GM12878 (cell line): ENCODE measurements at regions of chr18 and their contacts with region 1.

Region 1: GRCh38 chr18:50967714-50968661 is at the start of gene ELAC1:
- DNase-seq: peak; percentile 20
- ATAC-seq: peak; percentile 96
- H3K4me3 ChIP-seq: peak within 1 kb of the TSS; percentile 74
- H3K27ac ChIP-seq: peak within 1 kb of the TSS; percentile 89
- H3K4me1 ChIP-seq: peaks cover 5% of the 10 kb centered on the region
- H3K27me3 ChIP-seq: no peaks in the 10 kb centered on the region
- CTCF ChIP-seq: no peak
- EP300 ChIP-seq: no peak
- POLR2A ChIP-seq: peak; percentile 97
- RAD21 ChIP-seq: no peak
- polyA plus RNA-seq, gene ELAC1: 4.9 to 8.0 TPM

Region 2: DNA sequence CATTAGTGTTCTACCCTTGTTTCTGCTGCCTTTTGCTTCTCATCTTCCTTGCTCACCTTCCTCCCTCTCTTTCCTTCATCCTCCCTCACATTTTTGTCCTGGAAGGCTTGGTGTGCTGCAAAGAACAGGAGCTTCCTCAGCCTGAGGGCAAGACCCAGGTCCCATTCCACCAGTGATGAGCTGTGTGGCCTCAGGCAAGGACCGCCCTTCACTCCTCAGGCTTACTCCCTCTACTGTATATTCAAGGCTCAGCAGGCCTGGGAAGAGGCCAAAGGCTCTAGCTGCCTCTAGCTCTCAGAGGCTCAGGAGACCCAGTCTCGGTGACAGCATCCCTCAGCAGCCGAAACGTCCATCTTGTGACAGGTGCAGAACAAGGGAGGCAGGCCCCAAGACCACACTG is 245.7 kb before region 1 on chr18:
- CTCF ChIA-PET with region 1: no interaction called
- POLR2A ChIA-PET with region 1: no interaction called
- RAD21 ChIA-PET with region 1: no interaction called
- SMC1A ChIA-PET with region 1: no interaction called
- in situ Hi-C with region 1: no loop called
- intact Hi-C with region 1: no loop called
- DNase-seq: no peak
- ATAC-seq: no peak; the same call in 2 of the 3 replicates
- H3K4me3 ChIP-seq: no peak overlapping the region
- H3K27ac ChIP-seq: no peak overlapping the region
- H3K4me1 ChIP-seq: peaks cover 5% of the 10 kb centered on the region
- H3K27me3 ChIP-seq: no peaks in the 10 kb centered on the region; a peak in 1 of 4 replicates
- CTCF ChIP-seq: 0 out of 6 replicates have a peak, but pooled peaks of 2 of the 3 experiments have one; percentile 3 to 10
- EP300 ChIP-seq: no peak
- POLR2A ChIP-seq: no peak
- RAD21 ChIP-seq: no peak

Region 3: GRCh38 chr18:50944245-50944932 is 23.6 kb before region 1 on chr18:
- CTCF ChIA-PET with region 1: no interaction called
- POLR2A ChIA-PET with region 1: no interaction called
- RAD21 ChIA-PET with region 1: no interaction called
- SMC1A ChIA-PET with region 1: no interaction called
- in situ Hi-C with region 1: no loop called
- intact Hi-C with region 1: no loop called
- DNase-seq: no peak
- ATAC-seq: no peak
- H3K4me3 ChIP-seq: no peak overlapping the region
- H3K27ac ChIP-seq: no peak overlapping the region
- H3K4me1 ChIP-seq: no peaks in the 10 kb centered on the region
- H3K27me3 ChIP-seq: no peaks in the 10 kb centered on the region
- CTCF ChIP-seq: no peak
- EP300 ChIP-seq: no peak
- POLR2A ChIP-seq: no peak
- RAD21 ChIP-seq: no peak

Region 4: DNA sequence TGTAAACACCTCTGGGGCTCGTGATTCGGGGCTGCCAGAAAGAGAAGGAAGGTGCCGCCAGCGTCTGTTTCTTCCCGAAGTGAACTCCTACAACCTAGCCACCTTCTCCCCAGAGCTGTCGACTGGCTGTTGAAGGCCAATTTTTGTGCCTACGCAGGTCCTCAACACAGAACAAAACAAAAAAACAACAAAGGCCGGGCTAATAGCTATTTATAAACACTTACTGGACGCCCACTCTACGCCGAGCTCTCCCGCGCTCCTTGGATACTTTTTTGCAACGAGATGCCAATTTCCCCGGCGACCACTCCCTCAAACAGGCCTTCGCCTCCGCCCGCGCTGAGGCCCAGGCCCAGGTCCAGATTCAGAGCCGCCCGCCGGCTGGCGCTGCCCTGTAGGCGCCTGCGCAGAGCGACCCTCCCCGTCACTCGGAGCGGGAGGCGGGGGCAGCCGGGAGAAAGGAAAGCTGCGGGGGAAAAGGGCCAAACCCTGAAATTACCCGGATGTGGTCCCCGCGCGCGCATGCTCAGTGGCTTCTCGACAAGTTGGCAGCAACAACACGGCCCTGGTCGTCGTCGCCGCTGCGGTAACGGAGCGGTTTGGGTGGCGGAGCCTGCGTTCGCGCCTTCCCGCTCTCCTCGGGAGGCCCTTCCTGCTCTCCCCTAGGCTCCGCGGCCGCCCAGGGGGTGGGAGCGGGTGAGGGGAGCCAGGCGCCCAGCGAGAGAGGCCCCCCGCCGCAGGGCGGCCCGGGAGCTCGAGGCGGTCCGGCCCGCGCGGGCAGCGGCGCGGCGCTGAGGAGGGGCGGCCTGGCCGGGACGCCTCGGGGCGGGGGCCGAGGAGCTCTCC is 61.9 kb after region 1 on chr18 and contains the start of gene SMAD4:
- CTCF ChIA-PET with region 1: interaction called, 8 read pairs
- POLR2A ChIA-PET with region 1: interaction called, 4 read pairs
- RAD21 ChIA-PET with region 1: interaction called, 3 read pairs
- SMC1A ChIA-PET with region 1: interaction called, 3 read pairs
- in situ Hi-C with region 1: no loop called
- intact Hi-C with region 1: loop called (anchors 1 kb)
- DNase-seq: peak; percentile 71
- ATAC-seq: peak; percentile 90
- H3K4me3 ChIP-seq: peak within 1 kb of the TSS; percentile 88
- H3K27ac ChIP-seq: peak within 1 kb of the TSS; percentile 77
- H3K4me1 ChIP-seq: peaks cover 6% of the 10 kb centered on the region
- H3K27me3 ChIP-seq: no peaks in the 10 kb centered on the region
- CTCF ChIP-seq: 0 out of 6 replicates have a peak, but pooled peaks of 1 of the 3 experiments have one; percentile 4
- EP300 ChIP-seq: no peak
- POLR2A ChIP-seq: peak; percentile 97
- RAD21 ChIP-seq: no peak
- polyA plus RNA-seq, gene SMAD4: 9.6 to 13.3 TPM

Region 5: DNA sequence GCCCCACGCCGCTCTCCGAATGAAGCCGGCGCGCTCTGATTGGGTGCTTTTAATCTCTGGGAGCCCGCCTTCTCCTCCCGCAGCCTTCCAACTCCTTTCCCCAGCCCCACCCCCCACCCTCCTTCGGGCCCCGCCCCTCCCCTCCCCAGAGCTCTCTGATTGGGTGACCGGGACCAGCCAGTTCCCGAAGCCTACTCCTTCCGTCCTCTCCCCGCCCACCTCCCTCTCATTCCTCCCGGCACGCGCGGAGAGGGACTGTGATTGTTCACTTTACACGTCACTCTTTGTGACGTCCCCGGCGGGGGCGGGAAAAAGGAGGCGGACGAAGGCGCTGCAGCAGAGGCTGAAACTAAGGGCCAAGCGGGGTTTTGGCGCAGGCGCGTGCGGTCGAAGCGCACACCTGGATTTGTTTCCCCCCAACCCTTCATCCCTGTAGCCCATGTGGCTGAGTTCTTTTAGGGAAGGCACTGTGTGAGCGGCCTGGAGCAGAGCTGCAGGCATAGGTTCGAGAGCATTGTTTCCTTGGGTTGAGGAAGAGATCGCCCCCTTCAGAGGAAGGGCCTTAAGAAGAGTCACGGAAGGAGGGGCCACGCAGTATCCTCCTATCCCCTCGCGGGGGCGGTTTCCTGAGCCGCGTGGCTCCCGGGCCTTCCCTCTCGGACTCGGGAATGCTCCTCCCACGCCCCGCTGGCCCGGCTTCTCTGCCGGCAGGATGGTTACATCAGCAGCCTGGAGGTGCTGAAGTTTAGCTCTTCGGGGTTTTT is 229.9 kb after region 1 on chr18 and contains the start of gene MEX3C:
- CTCF ChIA-PET with region 1: no interaction called
- POLR2A ChIA-PET with region 1: no interaction called
- RAD21 ChIA-PET with region 1: no interaction called
- SMC1A ChIA-PET with region 1: no interaction called
- in situ Hi-C with region 1: no loop called
- intact Hi-C with region 1: loop called (anchors 5 kb)
- DNase-seq: peak; percentile 95
- ATAC-seq: peak; percentile 83
- H3K4me3 ChIP-seq: peak within 1 kb of the TSS; percentile 69
- H3K27ac ChIP-seq: peak within 1 kb of the TSS; percentile 95
- H3K4me1 ChIP-seq: no peaks in the 10 kb centered on the region
- H3K27me3 ChIP-seq: no peaks in the 10 kb centered on the region
- CTCF ChIP-seq: peak in 2 of 3 experiments; percentile 9 to 23; a peak in 2 of 6 replicates
- EP300 ChIP-seq: no peak
- POLR2A ChIP-seq: peak; percentile 77
- RAD21 ChIP-seq: no peak
- polyA plus RNA-seq, gene MEX3C: 7.9 to 9.9 TPM